ENCODE measurements at regions of chr19 and their contacts with region 1.

Region 1: DNA sequence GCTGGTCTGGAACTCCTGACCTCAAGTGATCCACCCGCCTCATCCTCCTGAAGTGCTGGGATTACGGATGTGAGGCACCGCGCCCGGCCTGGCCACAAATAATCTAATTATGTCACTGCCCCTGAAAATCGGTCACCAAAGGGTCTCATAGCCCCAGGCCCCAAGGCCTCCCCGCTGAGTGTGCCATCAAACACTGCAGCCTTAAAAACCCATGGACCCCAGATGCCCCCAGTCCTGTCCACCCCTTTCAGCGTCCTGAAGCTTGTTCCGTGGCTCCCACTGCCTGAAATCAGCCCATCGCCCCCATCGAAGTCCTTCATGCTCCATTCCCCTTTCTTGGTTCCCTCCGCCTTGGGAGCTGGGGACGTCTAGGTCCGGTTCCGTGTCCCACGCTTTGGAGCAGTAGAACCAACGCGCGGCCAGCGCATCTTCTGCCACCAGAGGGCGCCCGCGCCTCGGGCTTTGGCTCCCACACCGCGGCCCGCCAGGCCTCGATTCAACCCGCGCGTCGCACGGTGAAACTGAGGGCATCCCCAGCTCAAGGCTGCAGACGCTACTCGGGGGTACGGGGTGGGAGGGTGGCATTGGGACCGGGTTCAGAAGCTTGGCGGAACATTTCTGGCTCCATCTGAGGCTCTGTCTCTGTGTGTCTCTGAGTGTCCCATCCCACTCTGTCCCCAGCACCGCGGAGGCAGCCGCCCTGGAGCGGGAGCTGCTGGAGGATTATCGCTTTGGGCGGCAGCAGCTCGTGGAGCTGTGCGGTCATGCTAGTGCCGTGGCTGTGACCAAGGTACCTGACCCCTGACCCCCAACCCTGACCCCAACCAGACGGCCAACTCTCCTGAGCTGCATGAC is 3.5 kb downstream of the YJEFN3 start:
- DNase-seq: peak; percentile 88
- ATAC-seq: peak; percentile 82
- H3K4me3 Mint-ChIP-seq: no peak overlapping the region
- H3K27ac Mint-ChIP-seq: peak overlapping the region; percentile 43
- H3K4me1 Mint-ChIP-seq: peaks cover 7% of the 10 kb centered on the region
- H3K27me3 Mint-ChIP-seq: no peaks in the 10 kb centered on the region
- CTCF ChIP-seq: peak; percentile 98

Region 2: GRCh38 chr19:19515764-19516519 is 16.2 kb before region 1 on chr19 and contains the start of gene NDUFA13:
- CTCF ChIA-PET with region 1: interaction called, 23 read pairs
- POLR2A ChIA-PET with region 1: interaction called, 6 read pairs
- intact Hi-C with region 1: no loop called
- DNase-seq: peak; percentile 96
- ATAC-seq: peak; percentile 92
- H3K4me3 Mint-ChIP-seq: peak within 1 kb of the TSS; percentile 93
- H3K27ac Mint-ChIP-seq: peak within 1 kb of the TSS; percentile 94
- H3K4me1 Mint-ChIP-seq: peaks cover 33% of the 10 kb centered on the region
- H3K27me3 Mint-ChIP-seq: no peaks in the 10 kb centered on the region
- CTCF ChIP-seq: no peak
- total RNA-seq, gene NDUFA13: 298 to 310 TPM

Region 3: DNA sequence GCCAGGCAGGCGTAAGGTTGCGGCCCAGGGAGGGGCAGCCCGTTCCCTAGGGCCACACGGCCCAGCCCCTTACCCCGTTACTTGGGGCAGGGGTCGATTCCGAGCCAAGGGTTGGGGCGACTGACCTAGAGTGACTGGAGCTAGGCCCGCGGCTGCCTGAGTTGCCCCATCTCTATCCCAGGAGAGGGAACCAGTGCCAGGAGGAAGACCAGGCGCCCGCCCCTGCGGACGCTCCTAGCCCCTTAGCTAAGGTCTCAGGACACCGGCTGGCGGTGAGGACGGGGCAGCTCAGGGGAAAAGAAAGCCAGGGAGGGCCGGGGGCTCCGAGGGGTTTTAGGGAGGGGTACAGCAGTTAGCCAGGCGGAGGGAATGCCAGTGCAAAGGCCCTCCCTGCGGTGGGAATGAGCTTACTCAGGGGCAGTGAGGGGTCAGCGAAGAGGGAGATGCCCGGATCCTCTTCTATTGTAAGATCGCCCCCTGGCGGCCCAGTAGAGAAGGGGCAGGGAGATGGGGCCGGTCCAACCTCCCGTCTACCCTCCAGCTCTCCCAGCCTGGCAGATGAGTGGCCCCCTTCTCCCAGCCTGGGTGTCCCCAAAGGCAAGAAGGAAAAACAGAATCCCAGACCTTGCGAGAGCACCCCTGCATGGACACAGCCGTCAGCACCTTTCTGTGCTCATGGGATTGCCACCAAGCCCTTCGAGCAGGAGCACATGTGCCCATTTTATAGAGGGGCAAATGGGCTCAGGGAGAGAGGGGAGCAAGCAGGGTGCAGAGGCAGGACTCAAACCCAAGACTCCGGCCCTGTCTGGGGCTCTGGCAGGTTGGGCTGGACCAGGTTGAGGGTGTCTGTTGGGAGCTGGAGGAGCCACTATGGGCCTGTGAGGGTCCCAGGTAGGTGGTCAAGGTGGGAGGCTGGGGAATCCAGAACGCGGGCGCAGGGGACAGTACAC is 22.2 kb after region 1 on chr19:
- CTCF ChIA-PET with region 1: interaction called, 111 read pairs
- POLR2A ChIA-PET with region 1: interaction called, 3 read pairs
- intact Hi-C with region 1: no loop called
- DNase-seq: peak; percentile 76
- ATAC-seq: peak; percentile 80
- H3K4me3 Mint-ChIP-seq: no peak overlapping the region
- H3K27ac Mint-ChIP-seq: no peak overlapping the region
- H3K4me1 Mint-ChIP-seq: no peaks in the 10 kb centered on the region
- H3K27me3 Mint-ChIP-seq: no peaks in the 10 kb centered on the region
- CTCF ChIP-seq: peak; percentile 94

Region 4: DNA sequence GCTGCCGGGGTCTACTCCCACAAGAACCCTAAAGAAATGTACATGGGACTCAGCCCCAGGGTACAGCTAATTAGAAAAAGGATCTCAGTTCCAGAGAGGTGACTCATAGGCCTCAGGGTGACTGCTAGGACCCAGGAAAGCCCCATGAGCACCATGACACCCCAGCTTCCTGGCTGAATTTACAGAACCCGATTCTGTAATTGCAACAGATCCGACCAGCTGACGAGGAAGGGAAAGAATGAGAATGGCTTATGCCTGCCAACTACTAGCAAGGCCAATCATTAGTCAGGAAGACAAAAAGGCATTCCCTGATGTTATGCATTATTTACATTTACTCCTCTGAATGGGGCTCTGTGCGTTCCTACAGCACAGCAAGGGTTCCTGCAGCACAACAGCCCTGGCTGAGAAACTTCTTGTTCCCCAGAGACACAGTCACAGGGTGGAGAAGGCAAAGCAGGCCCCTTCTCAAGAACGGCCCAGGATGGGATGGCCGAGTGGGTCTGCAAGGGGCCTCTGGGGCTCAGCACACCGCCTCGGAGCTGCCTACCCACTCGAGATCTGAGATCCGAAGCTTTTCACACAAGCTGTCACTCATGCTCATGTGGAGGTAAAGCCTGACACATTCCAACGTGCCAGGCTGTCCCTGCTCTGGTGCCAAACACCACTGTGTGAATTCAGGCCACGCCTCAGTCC is 59.1 kb after region 1 on chr19:
- CTCF ChIA-PET with region 1: interaction called, 10 read pairs
- POLR2A ChIA-PET with region 1: interaction called, 3 read pairs
- intact Hi-C with region 1: no loop called
- DNase-seq: peak; percentile 86
- ATAC-seq: peak; percentile 90
- H3K4me3 Mint-ChIP-seq: peak overlapping the region; percentile 47
- H3K27ac Mint-ChIP-seq: peak overlapping the region; percentile 93
- H3K4me1 Mint-ChIP-seq: peaks cover 60% of the 10 kb centered on the region
- H3K27me3 Mint-ChIP-seq: no peaks in the 10 kb centered on the region
- CTCF ChIP-seq: no peak

Region 5: DNA sequence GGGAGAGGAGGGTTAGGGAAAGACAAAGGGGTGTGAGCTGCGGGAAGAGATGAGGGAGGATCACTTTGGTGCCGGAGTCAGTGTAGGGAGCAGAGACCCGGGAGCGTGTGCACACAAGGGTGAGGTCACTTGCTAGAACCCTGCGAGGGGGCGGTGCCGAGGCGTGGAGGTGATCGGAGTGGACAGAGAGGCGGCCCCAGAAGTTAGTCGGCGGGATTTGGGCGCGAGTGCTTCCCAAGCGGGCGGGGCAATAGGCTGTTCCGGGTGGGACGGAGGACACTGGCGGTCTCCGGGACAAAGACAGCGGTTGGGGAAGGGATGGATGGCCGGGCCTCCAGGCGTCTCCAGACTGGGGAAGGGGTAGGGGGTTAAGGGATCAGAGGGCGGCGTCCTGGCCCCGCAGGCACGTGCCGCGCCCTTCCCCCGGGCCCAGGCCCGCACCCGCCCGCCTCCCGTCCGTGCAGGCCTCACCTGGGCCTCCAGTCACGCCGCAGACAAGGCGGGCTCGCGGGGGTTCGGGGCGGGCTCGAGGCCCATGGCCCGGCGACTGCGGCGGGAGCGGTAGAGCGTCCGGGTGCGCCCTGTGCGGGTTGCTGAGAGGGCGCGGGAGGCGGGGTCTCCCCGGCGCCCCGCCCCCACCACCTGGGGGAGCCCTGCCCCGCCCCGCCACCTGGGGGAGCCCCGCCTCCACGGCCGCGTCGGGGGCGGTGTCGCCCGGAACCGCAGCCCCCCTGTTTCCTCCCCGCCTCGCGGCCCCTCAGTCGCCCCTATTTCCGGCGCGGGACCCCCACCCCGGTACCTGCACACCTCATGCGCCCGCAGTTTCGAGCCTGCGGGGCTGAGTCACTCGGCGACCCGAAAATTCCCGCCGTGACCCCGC is 95.7 kb after region 1 on chr19 and contains the start of gene LPAR2:
- CTCF ChIA-PET with region 1: interaction called, 15 read pairs
- POLR2A ChIA-PET with region 1: interaction called, 3 read pairs
- intact Hi-C with region 1: no loop called
- DNase-seq: peak; percentile 79
- ATAC-seq: peak; percentile 78
- H3K4me3 Mint-ChIP-seq: peak within 1 kb of the TSS; percentile 85
- H3K27ac Mint-ChIP-seq: peak within 1 kb of the TSS; percentile 94
- H3K4me1 Mint-ChIP-seq: peaks cover 24% of the 10 kb centered on the region
- H3K27me3 Mint-ChIP-seq: no peaks in the 10 kb centered on the region
- CTCF ChIP-seq: no peak
- total RNA-seq, gene LPAR2: 26.6 to 28.2 TPM

Region 6: DNA sequence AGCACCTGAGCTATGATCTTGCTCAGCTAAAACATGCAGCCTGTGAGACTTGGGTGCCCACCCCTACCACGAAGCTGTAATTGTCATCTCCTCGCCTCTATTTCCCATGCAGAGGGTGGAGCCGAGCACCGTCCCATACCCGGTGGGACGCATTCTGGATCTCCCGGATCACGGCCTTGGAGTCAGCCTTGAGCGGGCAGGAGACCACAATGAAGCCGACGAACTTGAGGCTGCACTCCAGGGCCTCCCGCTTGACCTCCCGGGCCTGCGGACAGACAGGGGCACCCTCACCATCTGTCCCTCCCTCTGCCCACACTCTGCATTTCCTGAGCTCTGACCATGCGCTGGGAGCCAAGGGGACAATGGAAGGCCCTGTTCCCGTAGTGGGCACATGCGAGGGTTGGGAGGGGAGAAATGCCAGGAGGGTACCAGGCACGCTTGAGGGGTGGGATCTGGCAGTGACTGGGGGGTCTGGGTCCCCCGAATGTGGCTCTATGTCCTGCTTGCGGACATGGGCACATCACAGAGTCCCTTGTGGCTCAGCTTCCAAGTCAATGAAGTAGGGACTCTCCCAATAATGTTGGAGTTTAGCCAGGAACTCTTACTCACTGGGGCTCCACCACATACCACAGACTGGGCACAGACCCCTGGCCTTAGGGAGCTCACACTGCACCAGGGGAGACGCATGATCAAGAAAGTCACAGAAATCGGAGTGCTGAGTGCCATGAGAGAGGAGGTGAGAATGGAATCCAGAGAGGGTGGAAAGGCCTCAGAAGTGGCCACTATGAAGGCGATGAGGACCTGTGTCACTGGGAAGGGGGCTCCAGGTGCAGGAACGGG is 120.5 kb after region 1 on chr19:
- CTCF ChIA-PET with region 1: interaction called, 12 read pairs
- POLR2A ChIA-PET with region 1: interaction called, 7 read pairs
- intact Hi-C with region 1: no loop called
- DNase-seq: no peak
- ATAC-seq: no peak
- H3K4me3 Mint-ChIP-seq: no peak overlapping the region
- H3K27ac Mint-ChIP-seq: no peak overlapping the region
- H3K4me1 Mint-ChIP-seq: peaks cover 3% of the 10 kb centered on the region
- H3K27me3 Mint-ChIP-seq: no peaks in the 10 kb centered on the region
- CTCF ChIP-seq: no peak

Region 7: GRCh38 chr19:19956434-19957075 is 424.4 kb after region 1 on chr19:
- CTCF ChIA-PET with region 1: interaction called, 12 read pairs
- POLR2A ChIA-PET with region 1: no interaction called
- intact Hi-C with region 1: loop called (anchors 5 kb)
- DNase-seq: peak; percentile 33
- ATAC-seq: peak; percentile 45
- H3K4me3 Mint-ChIP-seq: no peak overlapping the region
- H3K27ac Mint-ChIP-seq: no peak overlapping the region
- H3K4me1 Mint-ChIP-seq: peaks cover 5% of the 10 kb centered on the region
- H3K27me3 Mint-ChIP-seq: no peaks in the 10 kb centered on the region
- CTCF ChIP-seq: no peak